GM12878 (cell line): ENCODE measurements at regions of chr18 and their contacts with region 1.

Region 1: DNA sequence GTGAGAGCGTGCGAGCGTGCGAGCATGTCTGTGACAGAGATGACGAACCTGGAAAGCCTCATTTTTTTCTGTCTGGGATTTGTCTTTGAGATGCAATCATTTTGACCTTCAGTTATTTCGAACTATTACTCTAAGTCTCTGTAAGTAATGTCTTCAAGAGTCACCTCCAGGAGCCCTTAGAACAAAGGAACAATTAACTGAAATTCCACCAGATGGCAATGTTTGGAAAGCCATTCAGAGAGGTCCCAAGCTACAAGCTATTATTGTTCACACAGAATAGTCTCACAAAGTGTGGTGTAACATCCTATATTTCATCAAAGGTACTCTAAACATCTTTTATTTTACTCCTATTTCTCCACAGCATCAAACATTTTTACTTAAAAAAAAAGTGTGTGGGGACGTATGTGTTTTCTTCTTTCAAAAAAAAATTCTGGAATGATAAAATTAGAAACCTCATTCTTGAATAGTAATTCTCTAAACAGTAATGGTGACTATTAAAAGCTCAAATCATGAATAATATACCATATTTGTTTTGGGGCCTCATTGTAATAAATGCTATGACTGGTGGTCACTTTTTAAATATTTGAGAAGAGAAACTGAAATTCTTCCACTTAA is 35.1 kb upstream of the MAPRE2 start:
- DNase-seq: no peak
- ATAC-seq: peak; percentile 95
- H3K4me3 ChIP-seq: no peak overlapping the region
- H3K27ac ChIP-seq: no peak overlapping the region
- H3K4me1 ChIP-seq: no peaks in the 10 kb centered on the region
- H3K27me3 ChIP-seq: no peaks in the 10 kb centered on the region
- CTCF ChIP-seq: peak; percentile 44 to 64 (median 49); a peak in 4 of 6 replicates
- EP300 ChIP-seq: no peak
- POLR2A ChIP-seq: no peak
- RAD21 ChIP-seq: peak; percentile 89

Region 2: DNA sequence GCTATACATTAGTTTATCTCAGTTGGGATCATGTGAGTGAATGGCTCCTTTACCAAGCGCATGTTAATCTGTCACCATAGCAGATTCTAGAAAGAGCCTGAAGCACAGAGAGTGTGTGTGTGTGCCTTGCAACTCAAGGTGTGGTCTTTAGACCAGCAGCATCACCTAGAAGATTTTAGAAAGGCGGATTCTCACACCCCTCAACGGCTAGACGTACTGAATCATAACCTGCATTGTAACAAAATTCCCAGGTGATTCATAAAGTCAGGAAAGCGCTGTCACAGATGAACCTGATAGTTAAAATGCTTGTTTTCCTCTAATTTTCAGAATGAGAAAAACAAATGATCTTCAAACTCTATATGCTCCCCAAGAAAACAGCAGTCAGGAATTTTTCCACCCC is 10.3 kb before region 1 on chr18:
- CTCF ChIA-PET with region 1: interaction called, 10 read pairs
- POLR2A ChIA-PET with region 1: no interaction called
- RAD21 ChIA-PET with region 1: interaction called, 3 read pairs
- SMC1A ChIA-PET with region 1: interaction called, 6 read pairs
- in situ Hi-C with region 1: no loop called
- intact Hi-C with region 1: no loop called
- DNase-seq: no peak
- ATAC-seq: no peak
- H3K4me3 ChIP-seq: no peak overlapping the region
- H3K27ac ChIP-seq: no peak overlapping the region
- H3K4me1 ChIP-seq: no peaks in the 10 kb centered on the region
- H3K27me3 ChIP-seq: no peaks in the 10 kb centered on the region
- CTCF ChIP-seq: no peak
- EP300 ChIP-seq: no peak
- POLR2A ChIP-seq: no peak
- RAD21 ChIP-seq: no peak

Region 3: GRCh38 chr18:35143622-35144596 is 137.8 kb after region 1 on chr18:
- CTCF ChIA-PET with region 1: interaction called, 52 read pairs
- POLR2A ChIA-PET with region 1: no interaction called
- RAD21 ChIA-PET with region 1: interaction called, 29 read pairs
- SMC1A ChIA-PET with region 1: interaction called, 55 read pairs
- in situ Hi-C with region 1: loop called (anchors 10 kb)
- intact Hi-C with region 1: loop called (anchors 1 kb)
- DNase-seq: no peak
- ATAC-seq: peak; percentile 97
- H3K4me3 ChIP-seq: no peak overlapping the region
- H3K27ac ChIP-seq: no peak overlapping the region
- H3K4me1 ChIP-seq: peaks cover 4% of the 10 kb centered on the region
- H3K27me3 ChIP-seq: no peaks in the 10 kb centered on the region
- CTCF ChIP-seq: peak; percentile 49 to 77 (median 74)
- EP300 ChIP-seq: no peak
- POLR2A ChIP-seq: no peak
- RAD21 ChIP-seq: peak; percentile 69

Region 4: DNA sequence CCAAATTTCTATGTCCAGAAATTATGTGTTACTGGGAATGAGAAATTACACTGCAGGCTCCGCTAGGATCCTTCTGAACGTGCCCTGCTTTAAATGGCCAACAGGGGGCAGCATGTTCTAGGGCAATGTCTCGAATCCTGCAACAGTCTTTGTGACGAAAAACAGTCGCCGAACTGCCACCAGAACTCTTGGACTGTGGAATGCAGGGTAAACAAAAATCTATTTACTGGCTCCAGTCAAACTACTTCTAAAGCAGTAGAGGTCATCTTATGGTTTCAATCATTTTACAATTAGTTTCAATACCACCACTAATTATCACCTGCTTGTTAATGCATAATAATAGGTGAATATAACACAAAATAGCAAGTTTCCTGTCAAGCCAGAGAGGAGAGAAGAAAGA is 225.0 kb after region 1 on chr18:
- CTCF ChIA-PET with region 1: interaction called, 7 read pairs
- POLR2A ChIA-PET with region 1: no interaction called
- RAD21 ChIA-PET with region 1: interaction called, 3 read pairs
- SMC1A ChIA-PET with region 1: no interaction called
- in situ Hi-C with region 1: no loop called
- intact Hi-C with region 1: loop called (anchors 5 kb)
- DNase-seq: peak; percentile 33
- ATAC-seq: peak; percentile 95
- H3K4me3 ChIP-seq: peak overlapping the region; percentile 37; the same call in 1 of the 2 replicates
- H3K27ac ChIP-seq: no peak overlapping the region
- H3K4me1 ChIP-seq: no peaks in the 10 kb centered on the region
- H3K27me3 ChIP-seq: no peaks in the 10 kb centered on the region
- CTCF ChIP-seq: peak; percentile 89 to 95 (median 89)
- EP300 ChIP-seq: no peak
- POLR2A ChIP-seq: no peak
- RAD21 ChIP-seq: peak; percentile 96

Region 5: GRCh38 chr18:35355140-35355618 is 349.1 kb after region 1 on chr18:
- CTCF ChIA-PET with region 1: interaction called, 3 read pairs
- POLR2A ChIA-PET with region 1: no interaction called
- RAD21 ChIA-PET with region 1: interaction called, 7 read pairs
- SMC1A ChIA-PET with region 1: interaction called, 3 read pairs
- in situ Hi-C with region 1: no loop called
- intact Hi-C with region 1: loop called (anchors 1 kb)
- DNase-seq: no peak
- ATAC-seq: peak; percentile 100
- H3K4me3 ChIP-seq: no peak overlapping the region
- H3K27ac ChIP-seq: no peak overlapping the region
- H3K4me1 ChIP-seq: no peaks in the 10 kb centered on the region
- H3K27me3 ChIP-seq: no peaks in the 10 kb centered on the region
- CTCF ChIP-seq: peak; percentile 73 to 76 (median 76)
- EP300 ChIP-seq: no peak
- POLR2A ChIP-seq: no peak
- RAD21 ChIP-seq: peak; percentile 67